WTC11 (cell line): ENCODE measurements at regions of chr7 and their contacts with region 1.

Region 1: GRCh38 chr7:30911561-30911969 is at the start of gene AQP1:
- DNase-seq: no peak
- ATAC-seq: no peak
- H3K4me3 Mint-ChIP-seq: no peak within 1 kb of the TSS
- H3K27ac Mint-ChIP-seq: no peak within 1 kb of the TSS
- H3K4me1 Mint-ChIP-seq: peaks cover 14% of the 10 kb centered on the region
- H3K27me3 Mint-ChIP-seq: no peaks in the 10 kb centered on the region
- CTCF ChIP-seq: no peak
- total RNA-seq, gene AQP1: 0.81 to 1.4 TPM (median 1.1 TPM) in 3 replicates

Region 2: GRCh38 chr7:30791114-30791779 is 120.3 kb before region 1 on chr7:
- CTCF ChIA-PET with region 1: interaction called, 17 read pairs
- POLR2A ChIA-PET with region 1: no interaction called
- DNase-seq: peak; percentile 52
- ATAC-seq: peak; percentile 81
- H3K4me3 Mint-ChIP-seq: no peak overlapping the region
- H3K27ac Mint-ChIP-seq: no peak overlapping the region
- H3K4me1 Mint-ChIP-seq: peaks cover 7% of the 10 kb centered on the region; the same call in 1 of the 2 replicates
- H3K27me3 Mint-ChIP-seq: no peaks in the 10 kb centered on the region
- CTCF ChIP-seq: no peak

Region 3: GRCh38 chr7:30880090-30880720 is 31.4 kb before region 1 on chr7:
- CTCF ChIA-PET with region 1: interaction called, 11 read pairs
- POLR2A ChIA-PET with region 1: no interaction called
- DNase-seq: no peak
- ATAC-seq: no peak
- H3K4me3 Mint-ChIP-seq: no peak overlapping the region
- H3K27ac Mint-ChIP-seq: no peak overlapping the region; the same call in 1 of the 2 replicates
- H3K4me1 Mint-ChIP-seq: peaks cover 41% of the 10 kb centered on the region
- H3K27me3 Mint-ChIP-seq: no peaks in the 10 kb centered on the region; the same call in 1 of the 2 replicates
- CTCF ChIP-seq: no peak

Region 4: DNA sequence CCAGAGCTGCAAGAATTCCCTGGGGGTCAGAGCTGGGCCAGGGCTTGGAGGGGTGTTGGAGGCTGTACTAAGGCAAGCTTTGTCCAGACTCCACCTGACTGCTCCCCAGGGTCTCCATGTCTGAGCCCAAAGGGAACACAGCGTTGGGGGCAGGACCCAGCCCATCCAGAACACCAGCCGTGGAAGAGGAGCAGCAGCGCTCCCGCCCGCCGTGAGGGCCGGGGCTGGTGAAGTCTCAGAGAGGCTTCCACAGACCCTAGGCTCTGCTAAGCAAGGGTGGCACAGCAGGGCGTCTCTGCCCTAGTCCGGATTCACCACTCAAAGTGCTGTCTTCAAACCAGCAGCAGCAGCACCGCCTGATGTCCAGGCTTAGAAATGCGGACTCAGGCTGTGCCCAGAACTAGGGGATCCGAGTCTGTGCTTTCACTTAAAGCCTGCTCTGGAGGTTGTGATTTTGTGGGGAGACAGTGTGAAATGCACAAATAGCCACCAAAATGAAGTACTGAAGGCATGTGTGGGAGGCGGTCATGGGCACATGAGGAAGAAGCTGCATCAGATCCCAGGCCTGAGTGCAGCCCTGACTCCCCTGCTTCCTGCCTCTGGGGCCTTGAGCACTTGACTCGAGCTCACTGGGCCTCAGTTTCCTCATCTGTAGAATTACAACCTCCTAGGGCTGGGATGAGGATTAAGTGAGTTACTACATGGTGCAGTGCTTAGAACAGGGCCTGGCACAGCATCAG is 16.5 kb before region 1 on chr7:
- CTCF ChIA-PET with region 1: interaction called, 11 read pairs
- POLR2A ChIA-PET with region 1: no interaction called
- DNase-seq: peak; percentile 30
- ATAC-seq: peak; percentile 59
- H3K4me3 Mint-ChIP-seq: no peak overlapping the region
- H3K27ac Mint-ChIP-seq: no peak overlapping the region
- H3K4me1 Mint-ChIP-seq: no peaks in the 10 kb centered on the region
- H3K27me3 Mint-ChIP-seq: no peaks in the 10 kb centered on the region
- CTCF ChIP-seq: no peak

Region 5: GRCh38 chr7:30931161-30931928 is 19.8 kb after region 1 on chr7:
- CTCF ChIA-PET with region 1: interaction called, 14 read pairs
- POLR2A ChIA-PET with region 1: no interaction called
- DNase-seq: no peak
- ATAC-seq: no peak; the same call in 1 of the 2 replicates
- H3K4me3 Mint-ChIP-seq: no peak overlapping the region
- H3K27ac Mint-ChIP-seq: no peak overlapping the region
- H3K4me1 Mint-ChIP-seq: 0 out of 2 replicates have a peak, but pooled peaks cover 4% of the 10 kb centered on the region
- H3K27me3 Mint-ChIP-seq: peaks cover 9% of the 10 kb centered on the region
- CTCF ChIP-seq: no peak

Region 6: DNA sequence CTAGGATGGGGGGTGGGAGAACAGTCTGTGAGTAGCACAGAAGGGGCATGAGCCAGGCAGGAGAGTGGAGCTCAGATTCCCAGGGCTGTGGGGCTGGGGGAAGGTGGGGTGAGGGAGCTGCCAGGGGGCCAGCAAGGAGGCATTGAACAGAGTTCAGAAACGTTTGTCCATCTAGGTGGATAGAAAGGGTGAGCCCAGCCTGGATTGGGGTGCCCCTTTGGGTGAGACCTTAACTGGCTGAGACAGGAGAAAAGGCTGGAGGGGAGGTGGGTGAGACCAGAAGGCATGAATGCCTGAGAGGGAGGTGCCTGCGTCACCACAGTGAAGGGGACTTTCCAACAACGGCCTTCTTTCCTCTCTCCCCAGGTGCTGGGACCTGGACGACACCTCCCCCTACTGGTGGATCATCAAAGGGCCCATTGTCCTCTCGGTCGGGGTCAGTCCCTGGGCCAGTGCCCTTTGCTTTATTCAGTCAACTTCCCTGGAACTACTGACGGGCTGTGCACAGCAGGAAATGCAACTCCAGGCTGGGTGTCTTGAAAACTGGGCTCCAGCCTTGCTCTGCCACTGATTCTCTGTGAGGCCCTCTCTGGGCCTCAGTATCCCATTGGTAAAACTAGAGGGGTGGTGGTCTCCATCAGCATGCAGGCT is 63.2 kb after region 1 on chr7:
- CTCF ChIA-PET with region 1: interaction called, 14 read pairs
- POLR2A ChIA-PET with region 1: no interaction called
- DNase-seq: peak; percentile 82
- ATAC-seq: peak; percentile 86
- H3K4me3 Mint-ChIP-seq: no peak overlapping the region
- H3K27ac Mint-ChIP-seq: no peak overlapping the region
- H3K4me1 Mint-ChIP-seq: peaks cover 8% of the 10 kb centered on the region
- H3K27me3 Mint-ChIP-seq: no peaks in the 10 kb centered on the region; the same call in 1 of the 2 replicates
- CTCF ChIP-seq: peak; percentile 90